Right ventricle myocardium inferior (tissue), 1 donor: ENCODE measurements at regions of chr11 and their contacts with region 1.

Region 1: DNA sequence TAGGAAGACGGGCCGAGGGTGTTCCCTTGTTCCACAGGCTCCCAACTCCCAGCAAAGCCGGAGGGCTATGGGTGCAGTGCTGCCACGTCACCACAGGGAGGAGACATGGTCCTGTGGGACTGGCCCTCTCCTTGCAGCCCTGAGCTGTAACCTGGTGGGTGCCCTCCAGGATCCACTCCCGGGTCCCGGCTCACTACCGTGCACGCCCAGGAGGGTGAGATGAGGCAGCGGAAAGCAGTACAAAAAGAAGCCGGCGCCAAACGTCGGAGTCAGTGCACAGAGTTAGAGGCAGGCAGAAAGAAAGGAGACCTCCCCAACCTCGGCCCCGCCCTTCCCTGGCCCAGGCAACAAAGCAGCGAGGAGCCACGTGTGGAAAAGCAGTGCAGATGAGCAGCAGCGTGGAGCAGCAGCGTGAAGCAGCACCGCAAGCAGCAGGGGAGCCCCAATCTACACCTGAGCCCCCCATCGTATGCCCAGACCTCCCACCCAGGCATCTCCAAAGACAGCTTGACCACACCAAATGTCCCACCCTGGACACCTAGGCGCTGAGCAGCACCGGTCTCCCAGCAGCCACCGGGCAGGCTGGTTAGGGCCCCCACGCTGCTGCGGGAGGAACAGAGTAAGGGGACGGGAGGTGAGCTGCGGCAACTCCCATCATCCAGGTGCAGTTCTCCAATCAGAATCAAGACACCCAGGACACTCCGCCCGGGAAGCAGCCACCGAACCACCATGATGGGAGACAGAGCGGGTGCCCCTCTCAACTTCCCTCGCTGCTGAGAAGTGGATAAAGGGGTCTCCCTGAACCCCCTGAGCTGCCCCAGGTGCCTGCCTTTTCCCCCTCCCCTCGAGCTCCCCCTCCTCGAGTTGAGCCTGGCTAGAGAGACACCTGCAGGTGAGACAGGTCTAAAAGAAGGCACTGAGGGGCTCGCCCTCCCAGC is 28.8 kb downstream of the IGSF9B start:
- DNase-seq: peak; percentile 72
- ATAC-seq: peak; percentile 60

Region 2: DNA sequence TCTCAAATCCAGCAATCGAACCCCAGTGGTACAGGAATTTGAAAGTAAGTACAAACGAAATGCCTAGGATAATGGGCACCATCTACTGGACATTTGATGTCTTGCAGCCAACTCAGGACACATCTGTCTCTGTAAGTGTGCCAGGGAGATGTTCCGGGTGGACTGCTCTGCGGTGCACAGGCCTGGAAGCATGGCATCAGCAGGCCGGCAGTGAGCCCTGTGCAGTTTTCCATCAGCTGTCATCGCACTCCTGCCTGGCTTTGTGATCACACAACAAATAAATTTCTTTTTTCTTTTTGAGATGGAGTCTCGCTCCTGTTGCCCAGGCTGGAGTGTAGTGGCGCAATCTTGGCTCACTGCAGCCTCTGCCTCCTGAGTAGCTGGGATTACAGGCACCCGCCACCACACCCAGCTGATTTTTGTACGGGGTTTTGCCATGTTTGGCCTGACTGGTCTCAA is 211.9 kb after region 1 on chr11:
- intact Hi-C with region 1: loop called (anchors 2 kb)
- DNase-seq: no peak
- ATAC-seq: peak; percentile 87